GM10248 (cell line): ENCODE measurements at regions of chr1 and their contacts with region 1.

Region 1: GRCh38 chr1:235783148-235783776 is 83.4 kb downstream of the LYST start:
- DNase-seq: no peak
- CTCF ChIP-seq: no peak

Region 2: DNA sequence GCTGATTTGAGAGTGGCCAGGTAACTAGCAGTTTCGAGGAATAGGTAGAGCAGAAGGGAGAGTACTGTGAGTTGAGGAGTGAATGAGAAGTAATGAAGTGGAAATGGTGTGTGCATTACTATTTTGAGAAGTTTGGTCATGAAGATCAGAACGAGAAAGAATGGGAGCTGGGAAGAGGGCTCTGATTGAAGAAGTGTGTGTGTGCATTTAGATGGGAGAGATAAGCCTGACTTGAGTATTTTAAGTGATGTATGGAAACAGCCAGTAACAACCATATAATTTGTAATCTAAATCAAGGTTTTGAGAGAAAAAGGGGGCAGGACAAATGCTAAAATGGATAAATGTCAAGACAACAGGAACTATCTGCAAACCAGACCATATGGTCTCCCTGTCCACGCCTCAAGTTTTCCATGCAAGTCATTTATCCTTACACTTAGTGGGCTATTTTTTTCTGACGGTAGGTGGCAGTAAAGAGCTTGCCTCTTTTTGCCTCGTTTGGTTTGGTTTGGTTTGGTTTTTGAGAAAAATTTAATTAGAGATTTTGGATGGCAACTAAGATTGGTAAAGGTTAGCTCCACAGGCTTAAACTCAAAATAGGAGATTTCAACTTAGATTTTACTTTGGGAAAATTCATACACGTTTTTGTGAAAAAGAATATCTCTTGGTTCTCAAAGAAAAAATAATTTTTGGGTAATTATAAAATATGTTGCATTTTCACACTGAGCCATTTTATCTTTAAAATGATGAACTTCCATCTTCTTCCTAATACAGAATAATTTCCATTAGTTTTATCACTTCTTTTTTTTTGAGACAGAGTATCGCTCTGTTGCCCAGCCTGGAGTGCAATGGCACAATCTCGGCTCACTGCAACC is 269.5 kb before region 1 on chr1:
- CTCF ChIA-PET with region 1: interaction called, 12 read pairs
- POLR2A ChIA-PET with region 1: no interaction called
- DNase-seq: peak; percentile 32
- CTCF ChIP-seq: peak; percentile 73

Region 3: GRCh38 chr1:235597867-235598553 is 185.3 kb before region 1 on chr1:
- CTCF ChIA-PET with region 1: interaction called, 10 read pairs
- POLR2A ChIA-PET with region 1: no interaction called
- DNase-seq: no peak
- CTCF ChIP-seq: no peak

Region 4: GRCh38 chr1:235767795-235768194 is 15.5 kb before region 1 on chr1:
- CTCF ChIA-PET with region 1: interaction called, 22 read pairs
- POLR2A ChIA-PET with region 1: no interaction called
- DNase-seq: peak; percentile 44
- CTCF ChIP-seq: no peak

Region 5: DNA sequence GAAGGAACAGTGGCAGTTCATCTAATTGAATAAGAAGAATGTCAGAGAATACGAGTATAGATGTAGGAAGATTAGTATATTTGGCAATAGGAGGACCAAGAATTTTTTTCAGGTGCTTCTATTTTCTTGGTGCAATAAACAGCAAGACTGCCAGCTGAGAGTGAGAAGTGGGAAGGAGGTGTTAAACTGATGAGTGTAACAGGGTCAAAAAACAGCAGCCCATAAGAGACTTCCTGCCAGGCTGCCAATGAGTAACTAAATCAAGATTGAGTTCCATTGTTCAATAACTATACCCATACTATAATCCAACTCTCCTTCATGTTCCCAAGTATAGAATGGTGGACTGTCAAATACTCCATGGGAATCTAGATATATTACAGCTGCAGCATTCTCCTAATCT is 54.8 kb after region 1 on chr1:
- CTCF ChIA-PET with region 1: interaction called, 13 read pairs
- POLR2A ChIA-PET with region 1: no interaction called
- DNase-seq: no peak
- CTCF ChIP-seq: no peak

Region 6: DNA sequence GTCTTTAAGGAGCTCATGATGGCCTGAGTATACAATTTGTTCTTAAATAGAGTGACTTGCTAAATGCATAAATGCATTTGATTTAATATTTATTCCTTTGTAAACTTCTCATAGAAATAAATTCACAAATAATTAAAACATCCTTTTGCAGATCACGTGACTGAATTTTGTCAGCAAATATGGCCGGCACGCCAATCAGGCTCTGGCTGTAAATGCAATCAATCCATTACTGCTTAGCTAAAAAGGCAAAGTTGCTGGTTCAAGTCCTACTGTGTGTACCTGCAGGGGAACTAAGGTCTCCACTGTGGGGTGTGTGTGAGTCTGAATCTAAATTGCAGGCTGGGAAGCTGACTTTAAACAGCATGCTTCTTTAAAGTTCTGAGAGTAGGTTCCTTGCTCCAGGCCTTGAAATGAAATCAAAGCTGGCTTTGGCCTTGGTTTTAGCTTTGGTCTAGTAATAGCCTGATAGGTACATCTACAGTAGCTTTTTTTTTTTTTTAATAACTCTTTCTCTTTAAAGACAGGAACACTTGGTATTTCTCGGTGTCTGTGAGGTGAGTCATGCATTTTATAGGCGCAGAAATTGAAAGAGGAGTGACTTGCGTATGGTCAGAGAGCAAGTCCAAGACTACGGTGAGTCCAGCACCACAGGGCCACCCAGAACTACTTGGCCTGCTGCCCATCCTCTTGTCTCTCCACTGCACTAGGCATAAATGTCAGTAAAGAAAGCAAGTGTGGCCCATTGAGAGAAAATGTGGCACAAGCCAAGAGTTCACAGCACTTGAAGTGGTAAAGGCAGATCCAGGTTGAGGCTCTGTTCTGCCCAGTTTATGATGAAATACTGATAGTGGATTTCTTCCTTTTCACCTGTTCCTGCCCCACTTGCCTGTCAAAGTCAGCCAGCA is 119.6 kb after region 1 on chr1:
- CTCF ChIA-PET with region 1: no interaction called
- POLR2A ChIA-PET with region 1: no interaction called
- DNase-seq: no peak
- CTCF ChIP-seq: no peak